Vagina (tissue), 2 donors: ENCODE measurements at regions of chr5 and their contacts with region 1.

Region 1: DNA sequence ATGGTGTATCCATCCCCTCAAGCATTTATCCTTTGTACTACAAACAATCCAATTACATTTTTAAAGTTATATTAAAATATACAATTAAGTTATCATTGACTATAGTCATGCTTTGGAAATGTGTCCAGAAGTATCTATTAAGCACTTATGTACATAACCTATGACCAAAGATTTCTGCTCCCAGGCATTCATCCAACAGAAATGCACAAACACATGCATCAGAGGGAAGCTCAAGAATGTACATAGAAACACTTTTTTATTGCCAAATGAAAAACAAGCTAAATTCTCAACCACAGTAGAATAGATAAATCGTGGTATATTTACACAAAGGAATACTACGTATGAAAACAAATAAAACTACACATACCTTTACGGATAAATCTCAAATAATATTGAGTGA is 700.6 kb upstream of the ZNF608 start:
- DNase-seq: no peak
- H3K4me3 ChIP-seq: no peak overlapping the region
- H3K27ac ChIP-seq: no peak overlapping the region
- H3K4me1 ChIP-seq: no peaks in the 10 kb centered on the region
- H3K27me3 ChIP-seq: no peaks in the 10 kb centered on the region
- CTCF ChIP-seq: no peak
- POLR2A ChIP-seq: no peak

Region 2: GRCh38 chr5:125424402-125425141 is 22.4 kb before region 1 on chr5:
- intact Hi-C with region 1: no loop called
- DNase-seq: no peak
- H3K4me3 ChIP-seq: no peak overlapping the region
- H3K27ac ChIP-seq: no peak overlapping the region
- H3K4me1 ChIP-seq: no peaks in the 10 kb centered on the region
- H3K27me3 ChIP-seq: no peaks in the 10 kb centered on the region
- CTCF ChIP-seq: no peak
- POLR2A ChIP-seq: no peak

Region 3: DNA sequence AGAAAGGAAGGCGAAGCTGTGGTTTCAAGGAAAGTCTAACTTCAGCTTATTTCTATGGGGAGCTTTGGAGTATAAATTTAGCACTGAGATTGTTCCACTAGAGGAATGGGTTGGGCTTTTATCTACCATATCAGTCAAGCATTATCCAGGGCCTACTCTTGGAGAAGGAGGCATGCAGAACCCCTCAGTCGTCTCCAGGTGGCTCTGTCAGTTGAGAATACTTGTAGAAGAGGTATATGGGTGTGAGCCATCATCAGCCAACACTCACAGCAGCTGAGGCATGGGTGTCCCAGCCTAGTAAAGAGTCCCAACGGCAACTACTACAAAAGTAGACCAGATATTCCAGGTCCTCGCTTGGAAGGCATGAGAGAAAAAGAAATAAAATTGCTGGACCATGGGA is 427.7 kb after region 1 on chr5:
- intact Hi-C with region 1: no loop called
- DNase-seq: no peak
- H3K4me3 ChIP-seq: no peak overlapping the region
- H3K27ac ChIP-seq: no peak overlapping the region
- H3K4me1 ChIP-seq: no peaks in the 10 kb centered on the region
- H3K27me3 ChIP-seq: no peaks in the 10 kb centered on the region
- CTCF ChIP-seq: no peak
- POLR2A ChIP-seq: no peak

Region 4: DNA sequence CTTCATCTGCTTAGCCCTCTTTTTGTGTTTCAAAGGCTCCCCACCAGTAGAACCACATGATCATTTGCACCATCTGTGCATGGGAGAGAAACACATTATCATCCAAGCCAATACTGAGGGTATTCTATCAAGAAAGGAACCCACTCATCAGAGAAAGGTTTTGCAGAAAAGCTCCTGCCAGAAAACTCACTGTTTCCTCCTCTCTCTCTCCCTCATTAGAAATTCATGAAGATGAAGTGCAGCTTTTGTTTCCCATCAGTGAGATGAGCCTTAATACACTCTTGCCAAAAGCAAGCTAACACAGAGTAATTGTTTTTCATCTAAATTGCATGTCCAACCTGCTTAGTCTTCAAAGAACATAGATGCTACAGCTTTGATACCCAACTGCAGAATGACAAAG is 833.9 kb after region 1 on chr5:
- intact Hi-C with region 1: loop called (anchors 10 kb)
- DNase-seq: no peak
- H3K4me3 ChIP-seq: no peak overlapping the region
- H3K27ac ChIP-seq: no peak overlapping the region
- H3K4me1 ChIP-seq: no peaks in the 10 kb centered on the region
- H3K27me3 ChIP-seq: no peaks in the 10 kb centered on the region
- CTCF ChIP-seq: no peak
- POLR2A ChIP-seq: no peak